Common myeloid progenitor, CD34-positive (primary cell): ENCODE measurements at regions of chr17 and their contacts with region 1.

Region 1: DNA sequence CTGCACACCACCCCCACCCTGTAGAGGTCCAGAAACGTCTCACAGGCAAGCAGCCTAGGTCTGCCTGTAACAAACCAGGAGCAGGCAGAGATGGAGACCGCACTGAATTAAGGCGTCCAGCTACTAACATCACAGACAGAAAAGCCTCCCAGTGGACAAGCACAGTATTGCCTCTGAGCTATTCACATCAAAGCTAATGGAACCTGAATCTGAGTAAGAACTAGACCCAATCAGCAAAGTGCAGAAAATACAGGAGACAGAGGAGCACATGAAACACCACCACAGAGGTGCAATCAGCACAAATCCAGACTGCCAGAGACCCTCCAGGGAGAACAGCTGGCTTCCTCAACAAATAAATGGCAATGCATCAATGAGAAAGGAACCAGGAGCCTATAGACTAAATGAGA is 22.2 kb upstream of the PEMT start:
- DNase-seq: peak; percentile 68 to 83 (median 79)
- H3K4me3 ChIP-seq: no peak overlapping the region
- H3K27ac ChIP-seq: no peak overlapping the region
- H3K4me1 ChIP-seq: no peaks in the 10 kb centered on the region
- H3K27me3 ChIP-seq: no peaks in the 10 kb centered on the region

Region 2: DNA sequence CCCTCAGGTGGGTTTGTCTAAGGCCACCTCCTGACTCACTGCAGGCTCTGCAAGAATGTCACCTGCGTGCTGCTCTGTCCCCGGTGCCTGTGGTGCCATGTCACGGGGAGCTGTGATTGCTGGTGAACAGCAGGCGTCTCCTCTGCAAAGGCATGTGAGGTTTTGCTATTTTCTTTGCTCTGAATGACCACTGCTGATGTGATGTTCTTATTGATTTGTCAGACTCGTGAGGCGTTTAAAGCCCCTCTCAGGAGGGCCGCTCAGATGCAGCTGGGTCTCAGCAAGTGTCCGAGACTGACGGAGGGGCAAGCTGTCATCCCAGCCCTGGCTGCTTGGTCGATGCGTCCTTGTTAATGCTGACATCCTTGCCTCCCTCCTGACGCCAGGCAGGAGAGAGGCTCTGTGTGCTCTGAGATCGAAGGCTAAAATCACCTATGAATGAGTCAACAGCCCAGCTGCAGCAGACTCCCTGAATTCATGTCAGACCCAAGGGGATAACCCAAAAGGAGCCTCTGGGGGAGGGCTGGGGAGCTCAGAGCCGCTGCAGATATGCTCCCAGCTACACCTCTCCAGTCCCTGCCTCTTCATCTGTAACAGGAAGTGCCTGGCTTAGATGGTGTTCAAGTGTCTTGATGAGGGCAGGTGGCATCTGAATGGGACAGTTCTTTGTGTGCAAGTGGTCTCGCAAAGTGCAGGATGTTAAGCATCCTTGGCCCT is 10.4 kb before region 1 on chr17:
- CTCF ChIA-PET with region 1: interaction called, 12 read pairs
- POLR2A ChIA-PET with region 1: no interaction called
- DNase-seq: no peak
- H3K4me3 ChIP-seq: no peak overlapping the region
- H3K27ac ChIP-seq: no peak overlapping the region
- H3K4me1 ChIP-seq: no peaks in the 10 kb centered on the region
- H3K27me3 ChIP-seq: no peaks in the 10 kb centered on the region